IMR-90 (cell line): ENCODE measurements at regions of chr4 and their contacts with region 1.

Region 1: GRCh38 chr4:21790438-21791029 is 158.0 kb downstream of the KCNIP4 start:
- DNase-seq: peak; percentile 54
- ATAC-seq: no peak; the same call in 1 of the 2 replicates
- H3K4me3 ChIP-seq: no peak overlapping the region
- H3K27ac ChIP-seq: no peak overlapping the region
- H3K4me1 ChIP-seq: no peaks in the 10 kb centered on the region; the same call in 1 of the 2 replicates
- H3K27me3 ChIP-seq: no peaks in the 10 kb centered on the region
- CTCF ChIP-seq: peak; percentile 62
- POLR2A ChIP-seq: no peak
- RAD21 ChIP-seq: peak; percentile 64

Region 2: GRCh38 chr4:22129454-22130029 is 339.0 kb after region 1 on chr4:
- CTCF ChIA-PET with region 1: no interaction called
- POLR2A ChIA-PET with region 1: no interaction called
- dilution Hi-C with region 1: no loop called
- in situ Hi-C with region 1: no loop called
- intact Hi-C with region 1: loop called (anchors 1 kb)
- DNase-seq: peak; percentile 26
- ATAC-seq: peak; percentile 57
- H3K4me3 ChIP-seq: no peak overlapping the region
- H3K27ac ChIP-seq: no peak overlapping the region
- H3K4me1 ChIP-seq: no peaks in the 10 kb centered on the region
- H3K27me3 ChIP-seq: no peaks in the 10 kb centered on the region
- CTCF ChIP-seq: peak; percentile 43
- POLR2A ChIP-seq: no peak
- RAD21 ChIP-seq: peak; percentile 55

Region 3: GRCh38 chr4:22389240-22389870 is 598.8 kb after region 1 on chr4:
- CTCF ChIA-PET with region 1: interaction called, 58 read pairs
- POLR2A ChIA-PET with region 1: no interaction called
- dilution Hi-C with region 1: no loop called
- in situ Hi-C with region 1: no loop called
- intact Hi-C with region 1: loop called (anchors 1 kb)
- DNase-seq: peak; percentile 85
- ATAC-seq: peak; percentile 84
- H3K4me3 ChIP-seq: no peak overlapping the region
- H3K27ac ChIP-seq: no peak overlapping the region
- H3K4me1 ChIP-seq: peaks cover 8% of the 10 kb centered on the region
- H3K27me3 ChIP-seq: no peaks in the 10 kb centered on the region
- CTCF ChIP-seq: peak; percentile 96
- POLR2A ChIP-seq: no peak
- RAD21 ChIP-seq: peak; percentile 93

Region 4: GRCh38 chr4:22607382-22607781 is 816.8 kb after region 1 on chr4:
- CTCF ChIA-PET with region 1: interaction called, 3 read pairs
- POLR2A ChIA-PET with region 1: no interaction called
- dilution Hi-C with region 1: no loop called
- in situ Hi-C with region 1: no loop called
- intact Hi-C with region 1: loop called (anchors 2 kb)
- DNase-seq: peak; percentile 31
- ATAC-seq: peak; percentile 97
- H3K4me3 ChIP-seq: no peak overlapping the region
- H3K27ac ChIP-seq: no peak overlapping the region
- H3K4me1 ChIP-seq: no peaks in the 10 kb centered on the region
- H3K27me3 ChIP-seq: no peaks in the 10 kb centered on the region
- CTCF ChIP-seq: peak; percentile 64
- POLR2A ChIP-seq: no peak
- RAD21 ChIP-seq: peak; percentile 63

Region 5: GRCh38 chr4:22695917-22696316 is 905.4 kb after region 1 on chr4:
- CTCF ChIA-PET with region 1: no interaction called
- POLR2A ChIA-PET with region 1: no interaction called
- dilution Hi-C with region 1: no loop called
- in situ Hi-C with region 1: loop called (anchors 5 kb)
- intact Hi-C with region 1: no loop called
- DNase-seq: no peak
- ATAC-seq: no peak
- H3K4me3 ChIP-seq: no peak overlapping the region
- H3K27ac ChIP-seq: no peak overlapping the region
- H3K4me1 ChIP-seq: no peaks in the 10 kb centered on the region
- H3K27me3 ChIP-seq: no peaks in the 10 kb centered on the region; the same call in 1 of the 2 replicates
- CTCF ChIP-seq: no peak
- POLR2A ChIP-seq: no peak
- RAD21 ChIP-seq: no peak